WTC11 (cell line): ENCODE measurements at regions of chr17 and their contacts with region 1.

Region 1: GRCh38 chr17:5706577-5707216 is 122.4 kb upstream of the NLRP1 start:
- DNase-seq: peak; percentile 86
- ATAC-seq: peak; percentile 82
- H3K4me3 Mint-ChIP-seq: no peak overlapping the region
- H3K27ac Mint-ChIP-seq: no peak overlapping the region
- H3K4me1 Mint-ChIP-seq: peaks cover 29% of the 10 kb centered on the region
- H3K27me3 Mint-ChIP-seq: no peaks in the 10 kb centered on the region
- CTCF ChIP-seq: peak; percentile 79

Region 2: GRCh38 chr17:5571281-5571680 is 135.4 kb before region 1 on chr17:
- CTCF ChIA-PET with region 1: no interaction called
- POLR2A ChIA-PET with region 1: no interaction called
- DNase-seq: no peak
- ATAC-seq: no peak
- H3K4me3 Mint-ChIP-seq: no peak overlapping the region
- H3K27ac Mint-ChIP-seq: no peak overlapping the region
- H3K4me1 Mint-ChIP-seq: no peaks in the 10 kb centered on the region
- H3K27me3 Mint-ChIP-seq: peaks cover 39% of the 10 kb centered on the region
- CTCF ChIP-seq: no peak

Region 3: GRCh38 chr17:5592382-5592781 is 114.3 kb before region 1 on chr17:
- CTCF ChIA-PET with region 1: interaction called, 51 read pairs
- POLR2A ChIA-PET with region 1: no interaction called
- DNase-seq: no peak
- ATAC-seq: peak; percentile 57
- H3K4me3 Mint-ChIP-seq: no peak overlapping the region
- H3K27ac Mint-ChIP-seq: no peak overlapping the region
- H3K4me1 Mint-ChIP-seq: no peaks in the 10 kb centered on the region
- H3K27me3 Mint-ChIP-seq: no peaks in the 10 kb centered on the region
- CTCF ChIP-seq: 0 out of 2 replicates have a peak, but pooled peaks have one; percentile 14

Region 4: GRCh38 chr17:5598457-5598856 is 108.2 kb before region 1 on chr17:
- CTCF ChIA-PET with region 1: interaction called, 51 read pairs
- POLR2A ChIA-PET with region 1: no interaction called
- DNase-seq: no peak
- ATAC-seq: no peak
- H3K4me3 Mint-ChIP-seq: no peak overlapping the region
- H3K27ac Mint-ChIP-seq: no peak overlapping the region
- H3K4me1 Mint-ChIP-seq: no peaks in the 10 kb centered on the region
- H3K27me3 Mint-ChIP-seq: no peaks in the 10 kb centered on the region
- CTCF ChIP-seq: no peak

Region 5: GRCh38 chr17:5630434-5630833 is 76.3 kb before region 1 on chr17:
- CTCF ChIA-PET with region 1: no interaction called
- POLR2A ChIA-PET with region 1: no interaction called
- DNase-seq: no peak
- ATAC-seq: no peak
- H3K4me3 Mint-ChIP-seq: no peak overlapping the region
- H3K27ac Mint-ChIP-seq: no peak overlapping the region
- H3K4me1 Mint-ChIP-seq: no peaks in the 10 kb centered on the region
- H3K27me3 Mint-ChIP-seq: no peaks in the 10 kb centered on the region; the same call in 1 of the 2 replicates
- CTCF ChIP-seq: no peak

Region 6: GRCh38 chr17:5661491-5662125 is 45.1 kb before region 1 on chr17:
- CTCF ChIA-PET with region 1: interaction called, 18 read pairs
- POLR2A ChIA-PET with region 1: no interaction called
- DNase-seq: peak; percentile 18
- ATAC-seq: peak; percentile 72
- H3K4me3 Mint-ChIP-seq: no peak overlapping the region
- H3K27ac Mint-ChIP-seq: no peak overlapping the region
- H3K4me1 Mint-ChIP-seq: peaks cover 4% of the 10 kb centered on the region
- H3K27me3 Mint-ChIP-seq: no peaks in the 10 kb centered on the region
- CTCF ChIP-seq: no peak

Region 7: GRCh38 chr17:5667871-5668270 is 38.8 kb before region 1 on chr17:
- CTCF ChIA-PET with region 1: interaction called, 18 read pairs
- POLR2A ChIA-PET with region 1: no interaction called
- DNase-seq: peak; percentile 19
- ATAC-seq: peak; percentile 71
- H3K4me3 Mint-ChIP-seq: no peak overlapping the region
- H3K27ac Mint-ChIP-seq: no peak overlapping the region
- H3K4me1 Mint-ChIP-seq: peaks cover 4% of the 10 kb centered on the region
- H3K27me3 Mint-ChIP-seq: no peaks in the 10 kb centered on the region
- CTCF ChIP-seq: no peak

Region 8: DNA sequence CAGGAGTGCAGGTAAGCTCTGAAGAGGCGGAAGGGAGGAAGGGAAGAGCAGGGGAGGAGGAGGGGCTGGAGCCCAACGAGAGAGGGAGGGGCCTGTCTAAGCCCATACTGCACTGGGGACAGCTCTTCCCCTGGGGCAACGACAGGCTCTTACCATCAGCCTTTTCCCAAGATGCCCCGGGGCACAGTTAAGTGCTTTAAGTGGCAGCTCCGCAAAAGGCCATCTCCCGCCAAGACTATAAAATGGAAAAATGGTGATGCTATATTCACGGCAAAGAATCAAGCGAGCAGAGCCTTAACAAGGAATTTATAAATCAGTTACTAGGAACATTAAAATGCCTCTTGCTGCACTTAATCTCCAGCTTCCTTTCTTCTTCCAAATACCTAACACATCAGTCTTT is 12.1 kb before region 1 on chr17:
- CTCF ChIA-PET with region 1: interaction called, 38 read pairs
- POLR2A ChIA-PET with region 1: no interaction called
- DNase-seq: peak; percentile 59
- ATAC-seq: peak; percentile 97
- H3K4me3 Mint-ChIP-seq: no peak overlapping the region
- H3K27ac Mint-ChIP-seq: peak overlapping the region; percentile 13; the same call in 1 of the 2 replicates
- H3K4me1 Mint-ChIP-seq: peaks cover 47% of the 10 kb centered on the region
- H3K27me3 Mint-ChIP-seq: no peaks in the 10 kb centered on the region
- CTCF ChIP-seq: no peak

Region 9: GRCh38 chr17:5800675-5801074 is 94.0 kb after region 1 on chr17:
- CTCF ChIA-PET with region 1: interaction called, 10 read pairs
- POLR2A ChIA-PET with region 1: no interaction called
- DNase-seq: peak; percentile 28
- ATAC-seq: peak; percentile 75
- H3K4me3 Mint-ChIP-seq: no peak overlapping the region
- H3K27ac Mint-ChIP-seq: no peak overlapping the region
- H3K4me1 Mint-ChIP-seq: peaks cover 43% of the 10 kb centered on the region
- H3K27me3 Mint-ChIP-seq: peaks cover 12% of the 10 kb centered on the region; the same call in 1 of the 2 replicates
- CTCF ChIP-seq: no peak